Endothelial cell of umbilical vein (primary cell): ENCODE measurements at regions of chr4 and their contacts with region 1.

Region 1: DNA sequence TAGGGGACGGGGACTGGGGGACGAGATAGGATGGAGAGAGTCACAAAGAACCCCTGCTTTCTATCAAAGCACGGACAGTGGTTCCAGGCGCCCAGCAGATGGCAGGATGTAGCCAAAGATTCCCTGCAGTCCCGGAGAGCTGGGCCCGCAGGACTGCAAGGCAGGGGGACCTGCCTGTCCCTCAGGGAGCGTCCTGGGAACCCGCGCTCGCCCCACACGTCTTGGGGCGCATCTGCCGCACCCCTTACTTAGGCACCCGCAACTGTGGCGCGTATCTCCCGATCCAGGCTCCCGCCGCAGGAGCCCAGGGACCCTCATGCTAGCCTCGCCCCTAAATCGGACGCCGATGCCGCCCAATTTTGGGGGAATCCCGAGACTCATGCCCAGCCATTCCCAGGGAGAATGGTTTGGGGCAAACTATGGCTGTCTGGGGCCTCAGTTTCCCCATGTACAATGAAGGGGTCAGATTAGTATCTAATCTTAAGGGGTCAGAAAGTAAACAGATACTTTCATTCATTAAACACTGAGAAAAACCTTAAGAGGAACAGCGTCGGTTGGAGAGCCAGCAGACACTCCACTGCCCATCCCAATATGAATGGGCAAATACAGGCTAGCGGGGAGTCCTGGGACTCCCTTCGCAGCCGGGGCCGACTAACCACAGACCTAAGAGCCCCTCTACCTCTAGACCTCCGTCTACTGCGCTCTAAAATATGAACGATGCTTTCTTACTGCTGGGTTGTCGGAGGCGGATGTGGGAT is 581 bp upstream of the STK32B start:
- DNase-seq: peak; percentile 69
- H3K4me3 ChIP-seq: peak overlapping the region; percentile 45 to 64 (median 46)
- H3K27ac ChIP-seq: peak overlapping the region; percentile 9
- H3K4me1 ChIP-seq: peaks cover 12% of the 10 kb centered on the region
- H3K27me3 ChIP-seq: no peaks in the 10 kb centered on the region
- CTCF ChIP-seq: peak; percentile 64 to 80
- POLR2A ChIP-seq: no peak

Region 2: GRCh38 chr4:4995103-4995907 is 55.4 kb before region 1 on chr4:
- CTCF ChIA-PET with region 1: interaction called, 17 read pairs
- POLR2A ChIA-PET with region 1: no interaction called
- dilution Hi-C with region 1: no loop called
- intact Hi-C with region 1: loop called (anchors 1 kb)
- DNase-seq: peak; percentile 57
- H3K4me3 ChIP-seq: no peak overlapping the region
- H3K27ac ChIP-seq: no peak overlapping the region
- H3K4me1 ChIP-seq: no peaks in the 10 kb centered on the region
- H3K27me3 ChIP-seq: peaks cover 0 to 5% of the 10 kb centered on the region in 2 experiments
- CTCF ChIP-seq: peak; percentile 91 to 97
- POLR2A ChIP-seq: no peak

Region 3: DNA sequence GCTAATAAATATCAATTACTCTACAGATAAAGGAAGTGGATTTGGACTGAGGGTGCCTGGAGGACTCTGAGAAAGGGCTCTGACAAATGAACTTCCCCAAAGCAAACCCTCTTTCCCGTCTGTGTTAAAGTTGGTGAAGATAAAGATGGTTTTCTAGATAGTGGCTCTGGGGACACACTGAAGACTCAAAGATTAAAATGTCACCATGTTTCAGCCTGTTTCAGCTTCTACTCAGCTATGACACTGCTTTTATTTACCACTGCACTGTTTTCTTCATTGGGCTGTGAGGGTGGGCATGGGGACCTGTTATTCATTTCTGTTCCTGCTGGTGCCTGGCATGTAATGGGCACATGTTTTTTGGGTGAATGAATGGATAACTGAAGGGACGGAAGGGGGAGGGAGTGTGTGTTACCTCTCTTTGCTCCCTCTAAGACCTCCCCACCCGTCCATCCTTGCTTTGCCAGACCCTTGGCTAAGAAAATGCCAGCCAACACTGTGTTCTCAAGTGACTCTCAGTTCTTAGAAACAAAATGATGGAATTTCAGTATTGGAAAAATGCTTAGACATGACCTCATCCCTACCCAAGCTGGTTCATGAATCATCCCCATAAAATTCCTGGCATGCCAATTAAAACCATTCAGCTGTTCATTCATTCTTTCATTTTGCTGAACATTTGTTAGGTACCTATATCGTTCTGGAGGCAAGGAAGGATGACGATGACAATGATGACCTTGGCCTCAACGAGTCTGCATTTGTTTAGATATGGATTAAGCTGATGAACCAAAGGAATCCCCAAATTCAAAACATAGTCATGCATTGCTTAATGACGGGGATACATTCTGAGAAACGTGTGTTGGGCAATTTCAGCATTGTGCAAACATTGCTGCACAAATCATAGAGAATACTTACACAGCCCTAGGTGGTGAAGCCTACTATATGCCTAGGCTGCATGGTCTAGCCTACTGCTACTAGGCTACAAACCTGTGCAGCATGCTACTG is 12.8 kb before region 1 on chr4:
- CTCF ChIA-PET with region 1: interaction called, 54 read pairs
- POLR2A ChIA-PET with region 1: interaction called, 7 read pairs
- dilution Hi-C with region 1: no loop called
- intact Hi-C with region 1: loop called (anchors 1 kb)
- DNase-seq: peak; percentile 83
- H3K4me3 ChIP-seq: no peak overlapping the region
- H3K27ac ChIP-seq: peak overlapping the region; percentile 88
- H3K4me1 ChIP-seq: peaks cover 43% of the 10 kb centered on the region
- H3K27me3 ChIP-seq: no peaks in the 10 kb centered on the region
- CTCF ChIP-seq: no peak
- POLR2A ChIP-seq: no peak

Region 4: DNA sequence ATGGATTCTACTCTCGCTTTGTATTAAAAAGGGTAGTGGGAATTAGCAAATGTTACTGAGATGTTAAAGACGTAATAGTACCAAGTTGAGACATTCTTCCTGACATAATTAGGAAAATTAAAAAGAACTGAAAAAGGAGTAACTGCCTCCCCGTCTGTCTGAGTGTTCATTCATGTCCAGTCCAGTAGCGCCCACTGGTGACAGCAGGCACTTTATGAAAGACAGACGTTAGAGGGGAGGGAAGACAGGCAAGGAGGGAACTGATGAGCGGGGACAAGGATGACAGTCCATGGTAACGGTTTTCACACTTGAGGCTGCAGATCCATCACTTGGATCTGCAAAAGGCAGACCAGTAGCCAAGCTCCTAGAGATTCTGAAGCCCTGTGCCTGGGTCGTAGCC is 327.3 kb after region 1 on chr4:
- CTCF ChIA-PET with region 1: interaction called, 5 read pairs
- POLR2A ChIA-PET with region 1: no interaction called
- dilution Hi-C with region 1: no loop called
- intact Hi-C with region 1: loop called (anchors 1 kb)
- DNase-seq: no peak
- H3K4me3 ChIP-seq: no peak overlapping the region
- H3K27ac ChIP-seq: no peak overlapping the region
- H3K4me1 ChIP-seq: no peaks in the 10 kb centered on the region
- H3K27me3 ChIP-seq: no peaks in the 10 kb centered on the region
- CTCF ChIP-seq: no peak
- POLR2A ChIP-seq: no peak

Region 5: DNA sequence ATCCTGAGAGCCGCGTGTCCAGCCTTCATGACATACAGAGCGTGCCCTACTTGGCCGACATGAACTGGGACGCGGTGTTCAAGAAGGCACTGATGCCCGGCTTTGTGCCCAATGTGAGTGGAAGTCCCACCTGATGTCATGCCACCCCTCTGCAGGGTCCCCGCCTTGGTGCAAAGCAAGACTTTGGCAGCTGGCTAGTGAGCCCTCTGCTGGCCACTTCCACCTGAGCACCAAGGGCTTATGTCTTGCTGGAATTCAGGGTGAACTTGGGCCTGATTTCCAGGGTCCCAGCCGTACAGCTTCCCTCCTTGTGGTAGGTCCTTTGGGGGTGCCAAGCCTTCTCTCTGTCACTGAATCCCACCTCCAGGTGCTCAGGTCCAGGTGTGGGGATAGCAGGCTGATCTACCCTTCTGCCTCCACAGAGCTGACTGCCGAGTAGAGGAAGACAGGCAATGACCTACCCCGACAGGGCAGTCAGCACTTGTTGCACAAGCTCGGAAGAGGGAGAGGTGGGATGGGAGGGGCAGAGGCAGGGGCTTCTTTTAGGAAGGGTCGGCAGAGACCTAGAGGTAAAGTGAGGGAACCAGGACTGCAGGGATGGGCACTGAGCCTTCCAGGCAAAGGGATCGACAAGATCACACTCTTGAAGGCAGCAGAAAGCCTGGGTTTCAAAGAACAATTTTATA is 409.6 kb after region 1 on chr4:
- CTCF ChIA-PET with region 1: interaction called, 65 read pairs
- POLR2A ChIA-PET with region 1: no interaction called
- dilution Hi-C with region 1: no loop called
- intact Hi-C with region 1: loop called (anchors 1 kb)
- DNase-seq: peak; percentile 7
- H3K4me3 ChIP-seq: no peak overlapping the region
- H3K27ac ChIP-seq: no peak overlapping the region
- H3K4me1 ChIP-seq: no peaks in the 10 kb centered on the region
- H3K27me3 ChIP-seq: no peaks in the 10 kb centered on the region
- CTCF ChIP-seq: peak; percentile 36 to 64
- POLR2A ChIP-seq: no peak

Region 6: DNA sequence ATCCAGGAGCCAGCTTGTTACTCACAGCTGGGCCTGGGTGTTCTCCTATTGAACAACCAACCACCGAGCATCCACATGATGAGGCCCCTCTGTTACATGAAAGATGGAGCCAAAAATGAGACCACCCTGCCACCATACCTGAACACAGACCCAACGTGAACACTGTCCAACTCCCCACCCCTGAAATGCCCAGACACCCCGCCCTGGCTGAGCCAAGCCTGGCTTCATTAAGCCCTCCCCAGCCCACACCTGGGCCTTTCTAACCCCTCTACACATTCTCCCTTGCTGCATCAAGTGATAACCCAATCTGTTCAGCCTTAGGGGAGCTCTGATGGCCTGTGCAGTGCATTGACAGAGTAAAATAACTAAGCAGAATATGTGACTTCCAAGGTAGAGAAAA is 741.0 kb after region 1 on chr4:
- CTCF ChIA-PET with region 1: interaction called, 4 read pairs
- POLR2A ChIA-PET with region 1: no interaction called
- dilution Hi-C with region 1: no loop called
- intact Hi-C with region 1: loop called (anchors 1 kb)
- DNase-seq: no peak
- H3K4me3 ChIP-seq: no peak overlapping the region
- H3K27ac ChIP-seq: no peak overlapping the region
- H3K4me1 ChIP-seq: no peaks in the 10 kb centered on the region
- H3K27me3 ChIP-seq: no peaks in the 10 kb centered on the region
- CTCF ChIP-seq: no peak
- POLR2A ChIP-seq: no peak

Region 7: DNA sequence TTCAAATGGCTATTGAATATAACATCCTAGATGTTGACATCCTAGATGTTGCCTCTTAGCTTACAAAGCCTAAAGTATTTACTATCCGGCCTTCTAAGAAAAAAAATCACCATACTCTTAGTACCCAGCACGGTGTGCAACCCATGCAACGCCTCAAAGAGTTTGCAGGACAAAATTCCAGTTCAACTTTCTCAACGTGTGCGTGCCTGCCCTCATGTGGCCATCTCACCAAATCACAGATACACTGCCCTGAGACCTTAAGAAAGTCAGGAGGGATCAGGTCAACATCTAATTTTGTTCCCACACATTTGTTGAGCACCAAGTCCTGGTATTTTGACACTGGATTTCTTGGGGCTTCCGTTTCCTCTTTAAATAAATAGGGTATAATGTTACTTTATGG is 773.9 kb after region 1 on chr4:
- CTCF ChIA-PET with region 1: interaction called, 8 read pairs
- POLR2A ChIA-PET with region 1: no interaction called
- dilution Hi-C with region 1: no loop called
- intact Hi-C with region 1: loop called (anchors 1 kb)
- DNase-seq: peak; percentile 58
- H3K4me3 ChIP-seq: no peak overlapping the region
- H3K27ac ChIP-seq: no peak overlapping the region
- H3K4me1 ChIP-seq: peaks cover 23% of the 10 kb centered on the region
- H3K27me3 ChIP-seq: no peaks in the 10 kb centered on the region
- CTCF ChIP-seq: peak; percentile 58 to 70
- POLR2A ChIP-seq: peak; percentile 9

Region 8: GRCh38 chr4:6278801-6279197 is 1228.1 kb after region 1 on chr4:
- CTCF ChIA-PET with region 1: no interaction called
- POLR2A ChIA-PET with region 1: no interaction called
- dilution Hi-C with region 1: no loop called
- intact Hi-C with region 1: no loop called
- DNase-seq: peak; percentile 96
- H3K4me3 ChIP-seq: no peak overlapping the region
- H3K27ac ChIP-seq: peak overlapping the region; percentile 64
- H3K4me1 ChIP-seq: peaks cover 23% of the 10 kb centered on the region
- H3K27me3 ChIP-seq: no peaks in the 10 kb centered on the region
- CTCF ChIP-seq: no peak
- POLR2A ChIP-seq: peak; percentile 76